Activated T-helper 1 cell treated with anti-CD3 and anti-CD28 coated beads, Interleukin-12 subunit alpha, Interleukin-12 subunit beta, Interleukin-2, Interleukin-4 antibody, amounts not matched to agents 30 ng/mL and 10 ng/mL and 1 ng/mL, durations not matched to agents 14 hours and 24 hours and 36 hours (primary cell): ENCODE measurements at regions of chr3 and their contacts with region 1.

Region 1: DNA sequence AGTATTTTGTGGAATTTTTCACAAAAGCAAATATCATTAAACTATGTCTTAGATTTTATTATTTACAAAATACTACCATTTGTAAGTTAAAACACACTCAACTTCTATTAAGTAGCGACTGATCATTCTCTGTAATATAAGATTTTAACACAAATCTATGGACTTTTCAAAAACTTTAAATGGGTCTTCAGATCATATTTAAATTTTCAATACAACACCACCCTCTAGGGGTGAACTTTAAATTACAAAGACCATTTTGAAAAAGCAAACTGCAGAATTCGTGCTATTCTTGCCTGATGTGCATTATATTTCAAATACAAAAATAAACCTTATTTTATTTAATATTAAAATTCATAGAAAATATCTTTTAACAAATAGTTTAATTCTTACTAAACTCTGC is 8.2 kb upstream of the VGLL4 start:
- DNase-seq: no peak
- H3K4me3 Mint-ChIP-seq: no peak overlapping the region
- H3K27ac Mint-ChIP-seq: no peak overlapping the region
- H3K4me1 Mint-ChIP-seq: no peaks in the 10 kb centered on the region
- H3K27me3 Mint-ChIP-seq: peaks cover 15% of the 10 kb centered on the region

Region 2: DNA sequence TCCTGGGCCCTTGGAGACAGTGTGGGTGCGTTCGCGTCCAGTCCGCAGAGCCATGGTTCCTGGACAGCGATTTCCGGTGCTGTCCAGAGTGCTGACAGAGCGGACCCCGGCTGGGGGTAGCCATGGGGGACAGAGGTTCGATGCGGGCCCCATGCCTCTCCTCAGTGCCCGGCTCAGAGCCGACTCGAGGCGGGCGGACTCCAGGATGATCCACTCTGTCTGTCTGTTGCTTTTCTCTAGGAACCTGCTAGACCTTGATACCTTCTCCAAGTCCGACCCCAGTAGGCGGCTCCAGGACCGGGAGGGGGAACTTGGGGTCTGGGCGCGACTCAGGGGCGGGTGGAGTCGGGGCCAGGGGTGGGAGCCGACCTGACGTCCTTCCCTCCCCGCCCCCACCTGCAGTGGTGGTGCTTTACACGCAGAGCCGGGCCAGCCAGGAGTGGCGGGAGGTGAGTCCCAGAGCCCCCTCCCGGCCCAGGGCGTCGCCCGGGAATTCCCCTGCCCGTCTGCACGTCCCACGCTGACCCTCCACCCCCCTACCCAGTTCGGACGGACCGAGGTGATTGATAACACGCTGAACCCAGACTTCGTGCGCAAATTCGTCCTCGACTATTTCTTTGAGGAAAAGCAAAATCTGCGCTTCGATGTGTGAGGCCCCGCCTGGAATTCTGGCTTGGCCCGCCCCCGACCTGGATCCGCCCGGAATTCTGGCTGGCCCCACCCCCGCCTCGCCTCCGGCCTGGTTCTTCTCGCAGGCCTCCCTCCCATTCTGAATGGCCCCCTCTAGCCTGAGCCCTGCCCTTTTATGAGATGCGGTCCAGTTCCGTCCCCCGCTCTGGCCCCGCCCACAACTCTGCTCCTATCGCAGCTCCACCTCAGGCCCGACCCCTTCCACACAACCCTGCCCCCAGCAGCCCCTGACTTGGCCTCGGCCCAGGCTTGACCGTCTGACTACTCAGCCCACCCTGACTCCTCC is 1947.3 kb before region 1 on chr3:
- intact Hi-C with region 1: no loop called
- DNase-seq: no peak
- H3K4me3 Mint-ChIP-seq: no peak overlapping the region
- H3K27ac Mint-ChIP-seq: no peak overlapping the region
- H3K4me1 Mint-ChIP-seq: no peaks in the 10 kb centered on the region
- H3K27me3 Mint-ChIP-seq: peaks cover 23% of the 10 kb centered on the region

Region 3: GRCh38 chr3:10945683-10946287 is 706.1 kb before region 1 on chr3:
- intact Hi-C with region 1: loop called (anchors 1 kb)
- DNase-seq: peak; percentile 17
- H3K4me3 Mint-ChIP-seq: no peak overlapping the region
- H3K27ac Mint-ChIP-seq: no peak overlapping the region
- H3K4me1 Mint-ChIP-seq: no peaks in the 10 kb centered on the region
- H3K27me3 Mint-ChIP-seq: peaks cover 3% of the 10 kb centered on the region

Region 4: GRCh38 chr3:11236595-11237461 is 415.1 kb before region 1 on chr3:
- intact Hi-C with region 1: loop called (anchors 1 kb)
- DNase-seq: peak; percentile 62
- H3K4me3 Mint-ChIP-seq: no peak overlapping the region
- H3K27ac Mint-ChIP-seq: no peak overlapping the region
- H3K4me1 Mint-ChIP-seq: peaks cover 27% of the 10 kb centered on the region
- H3K27me3 Mint-ChIP-seq: peaks cover 22% of the 10 kb centered on the region

Region 5: GRCh38 chr3:11379233-11379823 is 272.6 kb before region 1 on chr3:
- intact Hi-C with region 1: loop called (anchors 1 kb)
- DNase-seq: no peak
- H3K4me3 Mint-ChIP-seq: no peak overlapping the region
- H3K27ac Mint-ChIP-seq: no peak overlapping the region
- H3K4me1 Mint-ChIP-seq: no peaks in the 10 kb centered on the region
- H3K27me3 Mint-ChIP-seq: no peaks in the 10 kb centered on the region

Region 6: DNA sequence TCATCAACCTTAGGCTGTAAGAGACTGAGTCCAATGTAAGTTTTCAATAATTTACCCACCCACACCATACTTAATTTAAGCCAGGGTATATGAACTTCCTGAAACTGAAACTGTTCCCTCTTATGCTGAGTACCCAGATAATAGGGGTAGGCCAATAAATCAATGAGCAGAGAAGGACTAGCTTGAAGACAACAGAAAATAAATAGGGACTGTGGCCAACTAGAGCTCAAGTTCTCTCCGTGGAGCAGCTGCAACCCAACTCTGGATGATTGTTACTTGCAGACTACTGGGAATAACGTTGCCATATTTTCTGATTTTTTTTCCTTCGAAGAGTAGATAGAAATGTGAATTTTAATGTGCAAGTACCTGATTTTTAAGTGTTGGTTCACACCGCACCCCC is 251.7 kb before region 1 on chr3:
- intact Hi-C with region 1: no loop called
- DNase-seq: no peak
- H3K4me3 Mint-ChIP-seq: no peak overlapping the region
- H3K27ac Mint-ChIP-seq: no peak overlapping the region
- H3K4me1 Mint-ChIP-seq: no peaks in the 10 kb centered on the region
- H3K27me3 Mint-ChIP-seq: no peaks in the 10 kb centered on the region

Region 7: DNA sequence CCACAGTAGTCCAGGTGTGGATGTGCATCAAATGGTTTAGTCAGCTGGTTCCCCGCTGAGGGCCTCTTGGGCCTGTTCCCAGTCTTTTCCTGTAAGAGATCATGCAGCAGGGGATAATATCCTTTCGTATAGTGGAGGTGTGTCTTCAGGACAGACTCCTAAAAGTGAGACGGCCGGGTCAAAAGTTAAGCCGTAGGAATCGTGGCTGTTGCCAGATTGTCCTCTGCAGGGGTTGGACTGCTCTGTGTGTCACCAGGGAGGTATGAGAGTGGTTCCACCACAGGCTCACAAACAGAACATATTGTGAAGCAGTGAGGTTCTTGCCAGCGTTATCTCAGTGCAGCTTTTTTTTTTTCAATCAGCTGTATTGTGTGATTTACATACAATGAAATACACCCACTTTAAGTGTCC is 103.2 kb before region 1 on chr3:
- intact Hi-C with region 1: no loop called
- DNase-seq: no peak
- H3K4me3 Mint-ChIP-seq: no peak overlapping the region
- H3K27ac Mint-ChIP-seq: no peak overlapping the region
- H3K4me1 Mint-ChIP-seq: no peaks in the 10 kb centered on the region
- H3K27me3 Mint-ChIP-seq: no peaks in the 10 kb centered on the region

Region 8: DNA sequence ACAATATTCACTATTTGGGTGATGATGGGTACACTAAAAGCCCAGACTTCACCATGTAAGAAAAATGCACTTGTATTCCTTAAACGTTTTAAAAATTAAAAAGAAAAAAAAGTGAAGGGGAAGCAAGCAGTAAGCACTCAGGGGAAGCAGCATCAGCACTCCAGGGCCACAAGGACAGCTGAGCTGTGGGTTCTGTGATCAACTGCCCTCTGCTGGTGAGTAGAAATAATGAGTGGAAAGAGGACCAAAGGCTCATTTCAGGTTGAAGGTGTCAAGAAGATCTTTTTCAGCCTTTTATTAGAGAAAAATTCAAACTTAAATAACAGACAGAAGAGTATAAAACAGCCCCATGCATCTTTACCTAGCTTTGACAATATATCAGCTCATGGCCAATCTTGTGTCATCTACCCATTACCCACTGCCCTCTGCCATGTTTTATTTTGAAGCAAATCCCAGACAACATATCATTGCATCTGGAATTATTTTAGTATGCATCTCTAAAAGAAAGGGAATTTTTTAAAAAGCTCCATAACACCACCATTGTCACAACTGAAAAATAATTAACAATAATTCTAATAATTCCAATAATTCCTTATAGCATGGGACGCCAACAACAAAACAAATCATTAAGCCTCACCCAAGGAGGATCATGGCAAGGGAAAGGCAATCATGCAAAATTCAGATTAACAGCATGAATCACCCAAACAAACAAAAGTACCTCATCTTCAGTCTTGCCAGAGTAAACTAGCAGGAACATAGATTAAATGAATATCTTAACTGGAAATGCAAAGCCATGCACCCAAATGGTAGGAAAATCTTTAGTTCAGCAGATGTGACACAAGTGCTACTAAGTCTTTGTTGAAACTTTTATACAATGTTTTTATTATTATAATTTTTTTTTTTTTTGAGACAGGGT is 152.3 kb after region 1 on chr3:
- intact Hi-C with region 1: loop called (anchors 1 kb)
- DNase-seq: peak; percentile 16
- H3K4me3 Mint-ChIP-seq: no peak overlapping the region
- H3K27ac Mint-ChIP-seq: no peak overlapping the region
- H3K4me1 Mint-ChIP-seq: peaks cover 10% of the 10 kb centered on the region
- H3K27me3 Mint-ChIP-seq: no peaks in the 10 kb centered on the region